ENCODE measurements at regions of chr1 and their contacts with region 1.

Region 1: GRCh38 chr1:201511941-201512539 is 5.1 kb upstream of the CSRP1 start:
- DNase-seq: peak; percentile 87 to 89
- H3K4me3 ChIP-seq: no peak overlapping the region
- H3K27ac ChIP-seq: peak overlapping the region; percentile 82 to 97 (median 84)
- H3K4me1 ChIP-seq: peaks cover 30 to 41% of the 10 kb centered on the region in 2 donors
- H3K27me3 ChIP-seq: no peaks in the 10 kb centered on the region
- CTCF ChIP-seq: peak in 1 of 6 experiments; percentile 3
- POLR2A ChIP-seq: peak in 1 of 2 donors; percentile 81

Region 2: GRCh38 chr1:201447911-201448871 is 63.8 kb before region 1 on chr1:
- intact Hi-C with region 1: loop called (anchors 5 kb)
- DNase-seq: peak; percentile 76 to 79
- H3K4me3 ChIP-seq: no peak overlapping the region
- H3K27ac ChIP-seq: peak overlapping the region in 1 of 3 donors; percentile 8
- H3K4me1 ChIP-seq: peaks cover 5 to 23% of the 10 kb centered on the region in 2 donors
- H3K27me3 ChIP-seq: no peaks in the 10 kb centered on the region
- CTCF ChIP-seq: peak; percentile 65 to 90 (median 79)
- POLR2A ChIP-seq: no peak

Region 3: DNA sequence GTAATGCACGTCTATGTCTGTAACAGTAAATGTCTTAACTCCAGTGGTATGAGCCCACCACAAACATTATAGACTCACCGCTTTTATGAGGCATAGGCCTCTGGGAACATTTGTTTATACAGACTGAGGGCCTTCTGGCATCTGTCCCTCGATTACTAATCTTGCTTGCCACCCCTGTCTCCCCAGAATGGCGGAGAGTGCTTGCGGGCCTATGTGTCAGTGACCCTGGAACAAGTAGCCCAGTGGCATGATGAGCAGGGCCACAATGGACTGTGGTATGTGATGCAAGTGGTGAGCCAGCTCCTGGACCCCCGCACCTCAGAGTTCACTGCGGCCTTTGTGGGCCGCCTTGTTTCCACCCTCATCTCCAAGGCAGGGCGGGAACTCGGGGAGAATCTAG is 358.4 kb after region 1 on chr1:
- intact Hi-C with region 1: no loop called
- DNase-seq: no peak
- H3K4me3 ChIP-seq: no peak overlapping the region
- H3K27ac ChIP-seq: no peak overlapping the region
- H3K4me1 ChIP-seq: peaks cover 0 to 3% of the 10 kb centered on the region in 2 donors
- H3K27me3 ChIP-seq: no peaks in the 10 kb centered on the region
- CTCF ChIP-seq: no peak
- POLR2A ChIP-seq: no peak

Measured in thyroid gland (tissue), 4 donors.